ENCODE measurements at regions of chr12 and their contacts with region 1.

Region 1: GRCh38 chr12:90102957-90103652 is 394.5 kb upstream of the ATP2B1 start:
- DNase-seq: peak; percentile 69
- H3K4me3 ChIP-seq: no peak overlapping the region
- H3K27ac ChIP-seq: no peak overlapping the region
- H3K4me1 ChIP-seq: peaks cover 11% of the 10 kb centered on the region
- CTCF ChIP-seq: peak; percentile 91

Region 2: GRCh38 chr12:89862511-89863179 is 240.5 kb before region 1 on chr12:
- CTCF ChIA-PET with region 1: no interaction called
- POLR2A ChIA-PET with region 1: interaction called, 3 read pairs
- intact Hi-C with region 1: loop called (anchors 5 kb)
- DNase-seq: peak; percentile 91
- H3K4me3 ChIP-seq: peak overlapping the region; percentile 49
- H3K27ac ChIP-seq: peak overlapping the region; percentile 78
- H3K4me1 ChIP-seq: peaks cover 63% of the 10 kb centered on the region
- CTCF ChIP-seq: no peak

Measured in OCI-LY7 (cell line).